ENCODE measurements at regions of chr10 and their contacts with region 1.

Region 1: DNA sequence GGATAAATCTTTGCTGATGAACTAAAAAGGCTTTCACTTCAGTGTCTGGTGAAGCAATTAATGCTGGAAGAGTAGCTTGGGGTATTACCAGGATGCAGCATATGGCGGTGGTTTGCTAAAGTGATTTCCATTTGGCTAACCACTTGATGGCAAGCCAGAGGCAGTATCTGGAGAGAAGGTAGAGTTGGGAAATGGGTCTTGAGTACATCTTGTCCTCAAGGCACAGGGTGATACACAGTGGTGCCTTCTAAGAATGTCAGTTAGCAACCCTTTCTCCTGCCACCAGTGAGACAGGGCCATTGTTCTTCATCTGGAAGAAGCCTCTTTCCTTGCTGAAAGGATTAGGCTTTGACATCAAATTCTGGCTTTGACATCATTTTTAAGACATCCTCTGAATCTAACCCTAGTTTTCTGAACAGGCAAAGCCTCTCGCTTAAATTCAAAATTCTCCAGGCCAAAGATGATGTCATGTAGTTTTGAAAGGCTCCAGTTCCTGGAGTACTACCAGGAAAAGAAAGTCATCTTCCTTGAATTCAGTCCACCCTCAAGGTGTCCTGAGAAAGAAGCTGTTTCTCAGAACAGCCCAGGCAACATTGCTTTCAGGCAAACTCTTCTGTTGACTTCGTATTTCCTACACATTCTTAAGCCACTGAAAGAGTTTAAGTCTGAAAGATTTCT is 162.4 kb downstream of the ARID5B start:
- DNase-seq: peak in 1 of 2 donors; percentile 77
- H3K4me3 ChIP-seq: peak overlapping the region in 1 of 2 donors; percentile 0
- H3K27ac ChIP-seq: peak overlapping the region; percentile 51 to 60
- H3K4me1 ChIP-seq: peaks cover under 1 to 59% of the 10 kb centered on the region in 2 donors
- H3K27me3 ChIP-seq: no peaks in the 10 kb centered on the region
- CTCF ChIP-seq: no peak

Region 2: DNA sequence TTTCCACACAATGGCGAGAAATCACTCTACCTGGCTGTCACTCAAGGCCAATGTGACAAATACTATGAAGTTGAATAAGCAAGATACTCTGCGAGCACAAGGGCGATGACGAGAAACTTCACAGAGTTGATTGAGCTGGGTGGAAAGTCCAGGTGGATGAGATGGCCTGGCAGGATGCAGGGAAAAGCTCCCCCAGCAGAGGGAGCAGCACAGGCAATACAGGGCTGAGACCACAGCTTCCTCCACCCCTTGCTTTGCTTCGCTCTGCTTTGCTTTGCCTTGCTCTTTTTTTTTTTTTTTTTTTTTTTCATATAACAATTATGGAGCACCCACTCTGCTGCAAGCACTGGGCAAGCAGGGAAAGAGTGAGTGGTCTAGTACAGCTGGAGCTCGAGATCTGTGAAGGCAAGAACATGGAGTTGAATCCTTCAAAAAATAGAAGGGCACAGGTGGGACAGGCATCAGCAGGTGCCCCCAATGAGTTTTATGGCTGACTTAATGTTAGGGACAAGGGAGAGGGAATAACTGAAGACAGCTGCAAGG is 312.9 kb before region 1 on chr10:
- intact Hi-C with region 1: no loop called
- DNase-seq: peak in 1 of 2 donors; percentile 69
- H3K4me3 ChIP-seq: no peak overlapping the region
- H3K27ac ChIP-seq: peak overlapping the region; percentile 49 to 65
- H3K4me1 ChIP-seq: peaks cover 0 to 26% of the 10 kb centered on the region in 2 donors
- H3K27me3 ChIP-seq: no peaks in the 10 kb centered on the region
- CTCF ChIP-seq: peak in 2 of 3 experiments; percentile 42

Region 3: GRCh38 chr10:62082729-62083411 is 18.9 kb after region 1 on chr10:
- intact Hi-C with region 1: loop called (anchors 2 kb)
- DNase-seq: no peak
- H3K4me3 ChIP-seq: peak overlapping the region; percentile 12 to 43
- H3K27ac ChIP-seq: peak overlapping the region; percentile 64 to 85
- H3K4me1 ChIP-seq: peaks cover 14 to 58% of the 10 kb centered on the region in 2 donors
- H3K27me3 ChIP-seq: no peaks in the 10 kb centered on the region
- CTCF ChIP-seq: no peak

Region 4: DNA sequence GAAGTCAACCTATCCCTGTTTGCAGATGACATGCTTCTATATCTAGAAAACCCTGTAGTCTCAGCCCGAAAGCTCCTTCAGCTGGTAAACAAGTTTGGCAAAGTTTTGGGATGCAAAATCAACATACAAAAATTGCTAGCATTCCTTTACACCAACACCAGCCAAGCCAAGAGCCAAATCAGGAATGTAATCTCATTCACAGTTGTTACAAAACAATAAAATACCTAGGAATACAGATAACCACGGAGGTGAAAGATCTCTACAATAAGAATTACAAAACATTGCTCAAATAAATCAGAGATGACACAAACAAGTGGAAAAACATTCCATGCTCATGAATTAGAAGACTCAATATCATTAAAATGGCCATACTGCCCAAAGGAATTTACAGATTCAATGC is 259.8 kb after region 1 on chr10:
- intact Hi-C with region 1: no loop called
- DNase-seq: no peak
- H3K4me3 ChIP-seq: no peak overlapping the region
- H3K27ac ChIP-seq: no peak overlapping the region
- H3K4me1 ChIP-seq: no peaks in the 10 kb centered on the region
- H3K27me3 ChIP-seq: no peaks in the 10 kb centered on the region
- CTCF ChIP-seq: no peak

Measured in ascending aorta (tissue), 2 donors.